ENCODE measurements at regions of chr2 and their contacts with region 1.

Region 1: GRCh38 chr2:74482801-74483674 is at the starts of genes CCDC142 and TTC31:
- DNase-seq: peak; percentile 87 to 96 (median 91)
- ATAC-seq: peak; percentile 94
- H3K4me3 ChIP-seq: peak within 1 kb of the TSS; percentile 77
- H3K4me3 Mint-ChIP-seq: peak within 1 kb of the TSS; percentile 99
- H3K27ac ChIP-seq: peak within 1 kb of the TSS; percentile 93 to 94
- H3K27ac Mint-ChIP-seq: peak within 1 kb of the TSS; percentile 97
- H3K4me1 ChIP-seq: peaks cover 31% of the 10 kb centered on the region
- H3K4me1 Mint-ChIP-seq: peaks cover 26% of the 10 kb centered on the region
- H3K27me3 ChIP-seq: no peaks in the 10 kb centered on the region
- H3K27me3 Mint-ChIP-seq: no peaks in the 10 kb centered on the region
- CTCF ChIP-seq: peak; percentile 85
- total RNA-seq, gene CCDC142: 10.2 to 12.4 TPM
- total RNA-seq, gene TTC31: 20.6 to 26.1 TPM

Region 2: GRCh38 chr2:74421221-74421870 is 61.7 kb before region 1 on chr2 and contains the starts of genes C2orf81 and WDR54:
- CTCF ChIA-PET with region 1: interaction called, 4 read pairs
- POLR2A ChIA-PET with region 1: interaction called, 7 read pairs
- intact Hi-C with region 1: loop called in 1 of 2 experiments (anchors 1 kb)
- DNase-seq: peak; percentile 85 to 97 (median 94)
- ATAC-seq: peak; percentile 82
- H3K4me3 ChIP-seq: peak within 1 kb of the TSS; percentile 98
- H3K4me3 Mint-ChIP-seq: peak within 1 kb of the TSS; percentile 100
- H3K27ac ChIP-seq: peak within 1 kb of the TSS; percentile 82 to 98
- H3K27ac Mint-ChIP-seq: peak within 1 kb of the TSS; percentile 96
- H3K4me1 ChIP-seq: peaks cover 20% of the 10 kb centered on the region
- H3K4me1 Mint-ChIP-seq: peaks cover 39% of the 10 kb centered on the region
- H3K27me3 ChIP-seq: no peaks in the 10 kb centered on the region
- H3K27me3 Mint-ChIP-seq: no peaks in the 10 kb centered on the region
- CTCF ChIP-seq: no peak
- total RNA-seq, gene C2orf81: 2.9 to 3.4 TPM
- total RNA-seq, gene WDR54: 21.7 to 25.1 TPM

Region 3: GRCh38 chr2:74472086-74472944 is 10.7 kb before region 1 on chr2 and contains the start of gene MRPL53:
- CTCF ChIA-PET with region 1: interaction called, 21 read pairs
- POLR2A ChIA-PET with region 1: interaction called, 86 read pairs
- intact Hi-C with region 1: loop called (anchors 1 kb)
- DNase-seq: peak; percentile 96 to 99 (median 97)
- ATAC-seq: peak; percentile 92
- H3K4me3 ChIP-seq: peak within 1 kb of the TSS; percentile 80
- H3K4me3 Mint-ChIP-seq: peak within 1 kb of the TSS; percentile 95
- H3K27ac ChIP-seq: peak within 1 kb of the TSS; percentile 85 to 91
- H3K27ac Mint-ChIP-seq: peak within 1 kb of the TSS; percentile 96
- H3K4me1 ChIP-seq: peaks cover 30% of the 10 kb centered on the region
- H3K4me1 Mint-ChIP-seq: peaks cover 25% of the 10 kb centered on the region
- H3K27me3 ChIP-seq: no peaks in the 10 kb centered on the region
- H3K27me3 Mint-ChIP-seq: no peaks in the 10 kb centered on the region
- CTCF ChIP-seq: no peak
- total RNA-seq, gene MRPL53: 39.5 to 44.3 TPM

Region 4: GRCh38 chr2:74498500-74499266 is 15.6 kb after region 1 on chr2:
- CTCF ChIA-PET with region 1: interaction called, 9 read pairs
- POLR2A ChIA-PET with region 1: interaction called, 21 read pairs
- intact Hi-C with region 1: no loop called
- DNase-seq: peak in 3 of 14 experiments; percentile 34 to 51 (median 41)
- ATAC-seq: peak; percentile 28
- H3K4me3 ChIP-seq: peak overlapping the region; percentile 64
- H3K4me3 Mint-ChIP-seq: peak overlapping the region; percentile 82
- H3K27ac ChIP-seq: no peak overlapping the region
- H3K27ac Mint-ChIP-seq: no peak overlapping the region
- H3K4me1 ChIP-seq: peaks cover 44% of the 10 kb centered on the region
- H3K4me1 Mint-ChIP-seq: peaks cover 53% of the 10 kb centered on the region
- H3K27me3 ChIP-seq: peaks cover 46 to 60% of the 10 kb centered on the region in 2 experiments
- H3K27me3 Mint-ChIP-seq: peaks cover 60% of the 10 kb centered on the region
- CTCF ChIP-seq: no peak

Region 5: DNA sequence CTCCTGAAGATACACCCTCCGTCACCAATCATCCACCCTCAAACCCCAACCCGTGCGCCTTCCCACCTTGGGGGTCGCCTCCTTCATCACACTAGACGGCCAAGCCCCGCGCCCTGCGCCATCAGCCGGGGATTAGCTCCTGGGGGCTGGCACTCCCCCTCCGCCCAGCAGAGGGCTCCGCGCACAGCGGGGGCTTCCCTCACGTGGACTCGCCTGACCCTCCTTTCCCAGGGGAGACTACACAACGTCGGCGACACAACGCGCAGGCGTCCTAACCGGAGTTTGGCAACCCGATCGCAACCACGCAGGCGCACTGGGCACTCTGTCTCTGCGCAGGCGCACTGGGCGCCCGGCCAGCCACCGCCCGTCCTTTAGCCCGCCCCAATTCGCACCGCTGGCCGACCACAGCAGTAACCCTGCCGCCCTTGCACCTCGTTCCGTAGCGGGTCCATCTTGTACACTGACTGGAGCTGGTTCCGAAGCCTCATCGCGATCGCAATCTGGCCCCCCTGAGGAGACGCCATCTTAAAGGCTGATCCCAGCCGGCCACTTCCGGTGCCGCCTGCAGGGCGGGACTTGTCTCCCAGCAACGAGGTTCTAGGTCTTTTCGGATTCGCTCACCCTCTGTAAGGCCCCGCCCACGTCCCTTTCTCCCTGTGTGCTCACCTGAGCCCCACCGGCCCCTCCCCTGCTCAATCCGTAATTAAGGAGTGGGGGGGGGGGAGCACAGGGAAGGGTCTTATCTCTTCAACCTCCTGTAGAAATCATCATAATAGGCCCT is 24.3 kb after region 1 on chr2 and contains the start of gene PCGF1:
- CTCF ChIA-PET with region 1: interaction called, 9 read pairs
- POLR2A ChIA-PET with region 1: interaction called, 12 read pairs
- intact Hi-C with region 1: no loop called
- DNase-seq: peak; percentile 97 to 100 (median 98)
- ATAC-seq: peak; percentile 95
- H3K4me3 ChIP-seq: peak within 1 kb of the TSS; percentile 92
- H3K4me3 Mint-ChIP-seq: peak within 1 kb of the TSS; percentile 100
- H3K27ac ChIP-seq: peak within 1 kb of the TSS; percentile 98
- H3K27ac Mint-ChIP-seq: peak within 1 kb of the TSS; percentile 97
- H3K4me1 ChIP-seq: peaks cover 49% of the 10 kb centered on the region
- H3K4me1 Mint-ChIP-seq: peaks cover 62% of the 10 kb centered on the region
- H3K27me3 ChIP-seq: peaks cover 25 to 41% of the 10 kb centered on the region in 2 experiments
- H3K27me3 Mint-ChIP-seq: peaks cover 75% of the 10 kb centered on the region
- CTCF ChIP-seq: no peak
- total RNA-seq, gene PCGF1: 11.6 to 13.8 TPM

Region 6: GRCh38 chr2:74587664-74588277 is 104.7 kb after region 1 on chr2:
- CTCF ChIA-PET with region 1: interaction called, 22 read pairs
- POLR2A ChIA-PET with region 1: interaction called, 24 read pairs
- intact Hi-C with region 1: loop called (anchors 1 kb)
- DNase-seq: peak; percentile 34 to 81 (median 50)
- ATAC-seq: peak; percentile 84
- H3K4me3 ChIP-seq: no peak overlapping the region
- H3K4me3 Mint-ChIP-seq: no peak overlapping the region
- H3K27ac ChIP-seq: no peak overlapping the region
- H3K27ac Mint-ChIP-seq: no peak overlapping the region
- H3K4me1 ChIP-seq: peaks cover 5% of the 10 kb centered on the region
- H3K4me1 Mint-ChIP-seq: peaks cover 13% of the 10 kb centered on the region
- H3K27me3 ChIP-seq: peaks cover 0 to 7% of the 10 kb centered on the region in 2 experiments
- H3K27me3 Mint-ChIP-seq: peaks cover 16% of the 10 kb centered on the region
- CTCF ChIP-seq: peak; percentile 59

Region 7: DNA sequence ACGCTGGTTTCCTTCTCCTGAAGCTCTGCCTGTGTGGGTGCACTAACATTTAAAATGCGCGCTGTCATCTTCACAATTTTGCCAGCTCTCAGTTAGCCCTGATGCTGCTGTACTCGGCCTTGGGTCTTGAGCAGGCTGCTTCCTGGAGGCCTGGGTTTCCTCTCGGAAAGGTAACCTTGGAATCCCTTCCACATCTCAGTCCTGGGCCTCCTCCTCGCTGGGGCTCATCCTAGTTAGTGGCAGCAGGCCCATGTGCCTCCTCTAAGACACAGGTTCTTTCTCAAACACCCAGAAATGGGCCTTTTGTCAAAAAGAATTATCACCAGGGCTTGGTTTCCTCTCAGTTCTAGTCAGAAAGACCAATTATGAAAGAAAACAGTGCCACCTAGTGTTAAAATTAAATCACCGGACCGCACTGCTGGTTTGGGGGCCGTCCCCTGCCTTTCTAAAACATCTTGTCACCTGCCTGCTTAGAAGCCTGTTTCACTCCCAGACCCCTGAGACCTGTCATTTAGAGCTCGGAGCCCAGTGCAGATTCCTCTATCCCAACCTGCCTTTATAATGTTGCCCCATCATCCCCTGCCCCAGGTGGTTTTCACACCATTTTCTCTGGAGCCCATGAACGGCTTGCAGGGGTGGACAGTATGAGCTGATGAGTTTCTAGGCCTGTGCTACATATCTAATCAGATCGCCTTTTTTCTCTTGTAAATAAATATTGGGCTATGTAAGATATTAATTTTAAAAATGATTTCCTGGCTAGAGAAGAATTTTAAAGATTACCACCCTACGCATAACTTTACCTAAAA is 393.2 kb after region 1 on chr2:
- CTCF ChIA-PET with region 1: no interaction called
- POLR2A ChIA-PET with region 1: no interaction called
- intact Hi-C with region 1: loop called in 1 of 2 experiments (anchors 5 kb)
- DNase-seq: peak; percentile 6 to 79 (median 34)
- ATAC-seq: peak; percentile 80
- H3K4me3 ChIP-seq: no peak overlapping the region
- H3K4me3 Mint-ChIP-seq: no peak overlapping the region
- H3K27ac ChIP-seq: no peak overlapping the region
- H3K27ac Mint-ChIP-seq: no peak overlapping the region
- H3K4me1 ChIP-seq: peaks cover 6% of the 10 kb centered on the region
- H3K4me1 Mint-ChIP-seq: peaks cover 7% of the 10 kb centered on the region
- H3K27me3 ChIP-seq: no peaks in the 10 kb centered on the region
- H3K27me3 Mint-ChIP-seq: no peaks in the 10 kb centered on the region
- CTCF ChIP-seq: peak; percentile 72